ENCODE measurements at regions of chr11 and their contacts with region 1.

Region 1: DNA sequence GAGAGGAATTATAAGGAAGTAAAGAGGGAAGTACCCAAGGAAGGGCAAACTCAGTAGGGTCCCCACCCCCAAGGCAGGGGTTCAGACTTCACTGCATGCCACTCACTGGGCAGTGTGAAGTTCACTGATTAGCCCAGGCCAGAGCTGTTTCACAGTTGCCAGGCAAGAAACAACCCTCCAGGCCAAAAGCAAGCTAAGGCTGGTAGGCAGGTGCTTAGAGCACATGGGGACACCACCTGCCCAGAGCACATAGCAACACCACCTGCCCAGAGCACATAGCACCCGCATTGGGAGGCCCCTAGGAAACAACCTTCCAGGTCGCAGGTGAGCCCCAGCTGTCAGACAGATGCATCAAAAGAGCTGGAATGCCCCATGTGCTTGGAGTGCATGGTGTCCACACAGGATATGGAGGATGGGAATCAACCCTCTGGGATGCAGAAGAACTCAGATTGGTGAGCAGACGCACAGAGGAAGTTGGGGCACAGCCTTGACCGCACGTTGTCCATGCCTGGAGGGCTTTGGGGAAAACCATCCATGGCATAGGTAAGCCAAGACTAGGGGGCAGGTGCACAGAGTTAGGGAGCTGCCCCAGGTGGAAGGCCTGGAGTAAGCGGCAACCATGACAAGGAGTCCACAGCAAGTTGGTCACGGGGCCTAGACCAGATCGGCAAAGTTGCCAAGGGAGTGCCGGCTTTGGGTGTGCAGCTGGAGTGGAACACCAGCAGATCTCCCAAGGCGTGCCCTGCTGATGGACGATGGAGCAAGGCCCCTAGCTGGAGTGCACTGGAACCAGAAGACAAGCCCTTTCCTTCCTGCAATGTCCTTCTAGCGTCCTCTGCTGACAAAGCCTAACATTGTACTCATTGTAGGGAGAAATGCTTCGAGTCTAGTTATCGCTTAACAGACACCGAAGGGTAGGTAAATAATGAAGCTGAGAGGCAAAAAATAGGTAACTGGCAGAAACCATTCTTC is 7.8 kb upstream of the TMEM216 start:
- DNase-seq: no peak
- H3K4me3 Mint-ChIP-seq: no peak overlapping the region
- H3K27ac Mint-ChIP-seq: no peak overlapping the region
- H3K4me1 Mint-ChIP-seq: peaks cover 8% of the 10 kb centered on the region
- H3K27me3 Mint-ChIP-seq: no peaks in the 10 kb centered on the region

Region 2: GRCh38 chr11:61254403-61255025 is 130.0 kb before region 1 on chr11:
- CTCF ChIA-PET with region 1: interaction called, 30 read pairs
- POLR2A ChIA-PET with region 1: no interaction called
- DNase-seq: peak; percentile 73
- H3K4me3 Mint-ChIP-seq: no peak overlapping the region
- H3K27ac Mint-ChIP-seq: no peak overlapping the region
- H3K4me1 Mint-ChIP-seq: no peaks in the 10 kb centered on the region
- H3K27me3 Mint-ChIP-seq: peaks cover 3% of the 10 kb centered on the region

Region 3: DNA sequence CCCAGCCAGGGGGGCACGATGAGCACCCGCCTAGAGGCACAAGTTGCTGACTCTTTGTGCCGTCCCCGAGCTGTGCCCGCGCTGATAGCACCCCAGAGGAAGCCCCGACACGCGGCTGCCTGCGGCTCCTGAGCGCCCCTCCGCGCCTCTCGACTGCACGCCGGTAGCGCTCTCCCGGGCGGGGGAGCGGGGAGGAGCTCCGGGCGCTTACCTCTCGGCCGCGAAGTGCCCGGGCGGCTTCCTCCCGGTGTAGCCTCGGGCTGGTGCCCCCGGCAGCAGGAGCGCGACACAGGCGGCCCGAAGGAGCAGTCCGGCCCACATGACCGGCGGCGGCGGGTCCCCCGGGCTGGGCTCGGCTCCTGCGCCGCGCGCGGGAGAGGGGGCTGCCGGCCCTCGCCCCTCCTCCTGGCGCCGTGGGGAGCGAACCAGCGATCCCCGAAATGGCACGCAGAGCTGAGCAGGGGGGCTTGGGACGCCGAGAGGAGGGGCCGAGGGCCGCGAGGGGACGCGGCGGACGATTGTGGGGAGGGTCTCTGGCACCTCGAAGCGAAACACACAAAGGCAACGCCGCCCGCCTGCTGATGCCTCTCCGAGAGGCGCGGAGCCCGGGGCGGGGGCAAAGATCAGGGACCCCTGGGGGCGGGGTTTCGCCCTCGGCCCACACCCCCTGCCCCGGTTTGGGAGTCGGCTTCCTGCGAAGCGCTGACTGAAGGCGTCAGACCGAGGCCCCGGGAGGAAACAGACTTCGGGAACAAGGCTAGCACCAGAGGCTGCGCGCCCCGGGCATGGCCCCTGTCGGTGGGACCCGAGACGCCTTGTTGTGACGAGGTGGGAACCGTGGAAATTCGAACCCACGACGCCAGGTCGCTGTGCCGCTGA is 89.6 kb before region 1 on chr11 and contains the start of gene VWCE:
- CTCF ChIA-PET with region 1: interaction called, 12 read pairs
- POLR2A ChIA-PET with region 1: interaction called, 7 read pairs
- DNase-seq: peak; percentile 76
- H3K4me3 Mint-ChIP-seq: peak within 1 kb of the TSS; percentile 70
- H3K27ac Mint-ChIP-seq: peak within 1 kb of the TSS; percentile 37
- H3K4me1 Mint-ChIP-seq: peaks cover 36% of the 10 kb centered on the region
- H3K27me3 Mint-ChIP-seq: peaks cover 13% of the 10 kb centered on the region
- total RNA-seq, gene VWCE: 0.98 to 1.7 TPM

Region 4: GRCh38 chr11:61342207-61342803 is 42.3 kb before region 1 on chr11:
- CTCF ChIA-PET with region 1: interaction called, 289 read pairs
- POLR2A ChIA-PET with region 1: no interaction called
- DNase-seq: no peak
- H3K4me3 Mint-ChIP-seq: no peak overlapping the region
- H3K27ac Mint-ChIP-seq: no peak overlapping the region
- H3K4me1 Mint-ChIP-seq: peaks cover 2% of the 10 kb centered on the region
- H3K27me3 Mint-ChIP-seq: no peaks in the 10 kb centered on the region

Region 5: DNA sequence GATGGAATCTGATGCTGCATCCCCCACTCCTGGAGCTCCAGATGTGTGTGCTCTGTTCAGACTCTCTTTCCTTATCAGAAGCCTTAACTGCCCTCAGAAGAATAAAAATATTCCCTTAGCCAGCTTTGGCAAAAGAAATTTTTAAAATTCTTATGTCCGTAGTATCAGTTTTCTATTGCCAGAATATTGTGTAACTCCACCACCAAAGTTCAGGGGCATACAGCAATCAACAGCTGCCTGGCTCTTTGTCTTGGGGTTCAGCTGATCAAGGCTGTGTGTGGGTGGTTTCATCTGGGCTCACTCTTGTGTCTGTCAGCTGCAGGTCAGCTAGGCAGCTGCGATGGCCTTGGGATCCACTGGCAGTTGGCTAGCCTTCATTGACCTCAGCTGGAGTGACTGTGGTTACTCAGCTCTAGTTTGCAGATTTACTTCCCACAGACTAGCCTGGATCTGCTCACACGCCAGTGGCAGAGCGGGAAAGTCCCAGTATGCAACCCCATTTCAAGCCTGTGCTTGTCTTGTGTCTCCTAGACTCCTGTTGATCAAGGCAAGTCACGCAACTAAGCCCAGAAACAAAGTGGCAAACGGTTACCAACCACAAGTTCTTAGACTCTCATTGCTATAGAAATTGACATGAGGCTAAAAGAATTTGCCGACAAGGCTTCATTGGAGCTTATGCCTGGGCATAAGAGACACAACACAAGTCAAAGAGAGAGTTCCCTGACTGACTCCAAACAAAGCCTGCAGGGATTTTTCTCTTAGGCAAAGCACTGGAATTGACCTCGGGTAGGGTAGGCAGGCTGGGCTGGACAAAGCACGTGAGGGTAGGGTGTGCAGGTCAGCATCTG is 15.0 kb before region 1 on chr11:
- CTCF ChIA-PET with region 1: interaction called, 66 read pairs
- POLR2A ChIA-PET with region 1: interaction called, 34 read pairs
- DNase-seq: no peak
- H3K4me3 Mint-ChIP-seq: no peak overlapping the region
- H3K27ac Mint-ChIP-seq: no peak overlapping the region
- H3K4me1 Mint-ChIP-seq: peaks cover 10% of the 10 kb centered on the region
- H3K27me3 Mint-ChIP-seq: no peaks in the 10 kb centered on the region

Region 6: GRCh38 chr11:61429691-61430582 is 45.4 kb after region 1 on chr11 and contains the starts of genes CPSF7 and SDHAF2:
- CTCF ChIA-PET with region 1: interaction called, 14 read pairs
- POLR2A ChIA-PET with region 1: interaction called, 5 read pairs
- DNase-seq: peak; percentile 98
- H3K4me3 Mint-ChIP-seq: peak within 1 kb of the TSS; percentile 99
- H3K27ac Mint-ChIP-seq: peak within 1 kb of the TSS; percentile 99
- H3K4me1 Mint-ChIP-seq: peaks cover 65% of the 10 kb centered on the region
- H3K27me3 Mint-ChIP-seq: no peaks in the 10 kb centered on the region
- total RNA-seq, gene CPSF7: 89.6 to 90.2 TPM
- total RNA-seq, gene SDHAF2: 47.3 to 47.5 TPM

Measured in activated CD4-positive, alpha-beta memory T cell treated with anti-CD3 and anti-CD28 coated beads, Interleukin-2, amount 10 ng/mL, durations not matched to agents 7 days and 5 days (primary cell).